Activated CD8-positive, alpha-beta T cell treated with anti-CD3 and anti-CD28 coated beads for 36 hours (primary cell): ENCODE measurements at regions of chr12 and their contacts with region 1.

Region 1: GRCh38 chr12:122051231-122051876 is 27.2 kb upstream of the MLXIP start:
- DNase-seq: no peak
- ATAC-seq: no peak
- H3K4me3 Mint-ChIP-seq: no peak overlapping the region
- H3K27ac Mint-ChIP-seq: no peak overlapping the region
- H3K4me1 Mint-ChIP-seq: peaks cover 4% of the 10 kb centered on the region
- H3K27me3 Mint-ChIP-seq: no peaks in the 10 kb centered on the region
- CTCF ChIP-seq: no peak

Region 2: GRCh38 chr12:121452340-121452984 is 598.9 kb before region 1 on chr12:
- CTCF ChIA-PET with region 1: no interaction called
- POLR2A ChIA-PET with region 1: no interaction called
- intact Hi-C with region 1: no loop called
- DNase-seq: no peak
- ATAC-seq: no peak
- H3K4me3 Mint-ChIP-seq: no peak overlapping the region
- H3K27ac Mint-ChIP-seq: no peak overlapping the region
- H3K4me1 Mint-ChIP-seq: peaks cover 32% of the 10 kb centered on the region
- H3K27me3 Mint-ChIP-seq: no peaks in the 10 kb centered on the region
- CTCF ChIP-seq: no peak

Region 3: GRCh38 chr12:122064025-122064777 is 12.8 kb after region 1 on chr12:
- CTCF ChIA-PET with region 1: interaction called, 21 read pairs
- POLR2A ChIA-PET with region 1: interaction called, 4 read pairs
- intact Hi-C with region 1: no loop called
- DNase-seq: peak; percentile 74
- ATAC-seq: peak; percentile 95
- H3K4me3 Mint-ChIP-seq: no peak overlapping the region
- H3K27ac Mint-ChIP-seq: no peak overlapping the region
- H3K4me1 Mint-ChIP-seq: peaks cover 17% of the 10 kb centered on the region
- H3K27me3 Mint-ChIP-seq: no peaks in the 10 kb centered on the region
- CTCF ChIP-seq: no peak

Region 4: DNA sequence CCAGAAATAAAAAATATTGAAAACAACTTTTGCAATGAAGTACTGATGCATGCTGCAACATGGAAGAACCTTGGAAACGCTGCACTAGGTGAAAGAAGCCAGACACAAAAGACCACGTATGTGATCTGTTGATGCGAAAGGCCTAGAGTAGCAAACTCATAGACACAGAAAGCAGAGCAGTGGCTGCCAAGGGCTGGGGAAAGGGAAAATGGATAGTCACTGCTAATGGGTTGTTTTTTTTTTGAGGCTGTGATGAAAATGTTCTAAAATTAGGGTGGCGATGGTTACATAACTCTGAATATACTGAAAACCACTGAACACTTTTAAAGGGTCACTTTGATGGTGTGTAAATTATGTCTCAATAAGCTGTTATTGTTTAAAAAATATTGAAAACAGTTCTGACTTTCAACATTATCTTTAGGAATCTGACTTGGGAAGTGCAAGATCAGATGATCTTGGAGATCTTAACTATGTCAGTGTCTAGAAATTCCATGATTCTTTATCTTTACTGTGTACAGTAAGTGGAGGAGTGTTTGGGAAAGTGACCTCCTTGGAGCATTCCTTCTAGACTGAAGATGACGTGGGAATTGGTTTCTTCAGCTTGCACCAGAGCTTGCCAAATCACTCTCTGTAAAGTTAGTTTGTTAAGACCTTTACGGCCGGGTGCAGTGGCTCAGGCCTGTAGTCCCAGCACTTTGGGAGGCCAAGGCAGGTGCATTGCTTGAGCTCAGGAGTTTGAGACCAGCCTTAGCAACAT is 39.6 kb after region 1 on chr12:
- CTCF ChIA-PET with region 1: interaction called, 11 read pairs
- POLR2A ChIA-PET with region 1: no interaction called
- intact Hi-C with region 1: no loop called
- DNase-seq: no peak
- ATAC-seq: no peak
- H3K4me3 Mint-ChIP-seq: no peak overlapping the region
- H3K27ac Mint-ChIP-seq: no peak overlapping the region
- H3K4me1 Mint-ChIP-seq: peaks cover 30% of the 10 kb centered on the region
- H3K27me3 Mint-ChIP-seq: no peaks in the 10 kb centered on the region
- CTCF ChIP-seq: no peak

Region 5: GRCh38 chr12:122116707-122117535 is 65.6 kb after region 1 on chr12:
- CTCF ChIA-PET with region 1: interaction called, 103 read pairs
- POLR2A ChIA-PET with region 1: interaction called, 9 read pairs
- intact Hi-C with region 1: loop called (anchors 2 kb)
- DNase-seq: no peak
- ATAC-seq: no peak
- H3K4me3 Mint-ChIP-seq: no peak overlapping the region
- H3K27ac Mint-ChIP-seq: no peak overlapping the region
- H3K4me1 Mint-ChIP-seq: peaks cover 26% of the 10 kb centered on the region
- H3K27me3 Mint-ChIP-seq: no peaks in the 10 kb centered on the region
- CTCF ChIP-seq: no peak

Region 6: GRCh38 chr12:122130150-122130549 is 78.8 kb after region 1 on chr12:
- CTCF ChIA-PET with region 1: interaction called, 103 read pairs
- POLR2A ChIA-PET with region 1: no interaction called
- intact Hi-C with region 1: no loop called
- DNase-seq: no peak
- ATAC-seq: no peak
- H3K4me3 Mint-ChIP-seq: no peak overlapping the region
- H3K27ac Mint-ChIP-seq: no peak overlapping the region
- H3K4me1 Mint-ChIP-seq: peaks cover 14% of the 10 kb centered on the region
- H3K27me3 Mint-ChIP-seq: no peaks in the 10 kb centered on the region
- CTCF ChIP-seq: no peak

Region 7: GRCh38 chr12:122190842-122191668 is 139.7 kb after region 1 on chr12:
- CTCF ChIA-PET with region 1: interaction called, 27 read pairs
- POLR2A ChIA-PET with region 1: no interaction called
- intact Hi-C with region 1: loop called (anchors 10 kb)
- DNase-seq: peak; percentile 87
- ATAC-seq: peak; percentile 98
- H3K4me3 Mint-ChIP-seq: no peak overlapping the region
- H3K27ac Mint-ChIP-seq: no peak overlapping the region
- H3K4me1 Mint-ChIP-seq: no peaks in the 10 kb centered on the region
- H3K27me3 Mint-ChIP-seq: peaks cover 3% of the 10 kb centered on the region
- CTCF ChIP-seq: peak; percentile 78

Region 8: DNA sequence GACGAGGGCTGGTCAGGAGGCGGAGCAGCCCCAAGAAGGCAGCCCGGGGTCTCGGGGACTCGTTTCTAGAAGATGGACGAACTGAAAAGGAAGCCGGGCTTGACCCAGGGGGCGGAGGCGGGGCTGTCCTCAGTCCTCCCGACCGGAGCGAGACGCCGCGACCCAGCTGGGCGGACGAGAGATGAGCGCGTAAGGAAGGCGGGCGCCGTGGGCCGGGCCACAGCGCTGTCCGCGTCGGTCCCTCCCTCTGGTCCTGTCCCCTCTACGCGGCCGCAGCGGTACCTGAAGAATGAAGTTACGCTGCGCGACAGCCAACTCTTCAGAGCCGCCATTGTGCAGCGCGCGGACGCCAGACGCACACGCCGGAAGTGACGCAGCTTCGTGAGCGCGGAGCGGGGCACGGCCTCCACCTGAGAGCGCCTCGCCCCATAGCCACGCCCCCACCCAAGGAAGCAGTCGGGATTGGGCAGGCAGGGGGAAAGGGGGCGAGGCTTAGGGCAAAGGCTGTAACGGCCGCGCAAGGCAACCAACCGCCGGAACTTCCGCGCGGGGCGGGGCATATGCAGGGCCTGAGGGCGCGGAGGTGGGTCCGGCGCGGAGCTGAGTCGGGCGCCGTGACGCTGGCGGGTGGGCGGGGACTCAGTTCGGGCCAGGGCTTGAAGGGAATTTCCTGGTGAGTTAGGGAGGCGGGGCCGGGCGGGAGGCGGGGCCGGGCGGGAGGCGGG is 174.5 kb after region 1 on chr12 and contains the start of gene DIABLO:
- CTCF ChIA-PET with region 1: interaction called, 10 read pairs
- POLR2A ChIA-PET with region 1: no interaction called
- intact Hi-C with region 1: no loop called
- DNase-seq: peak; percentile 100
- ATAC-seq: peak; percentile 97
- H3K4me3 Mint-ChIP-seq: peak within 1 kb of the TSS; percentile 87
- H3K27ac Mint-ChIP-seq: peak within 1 kb of the TSS; percentile 91
- H3K4me1 Mint-ChIP-seq: peaks cover 37% of the 10 kb centered on the region
- H3K27me3 Mint-ChIP-seq: no peaks in the 10 kb centered on the region
- CTCF ChIP-seq: no peak
- total RNA-seq, gene DIABLO: 50.5 to 55.2 TPM